A673 (cell line): ENCODE measurements at regions of chr11 and their contacts with region 1.

Region 1: DNA sequence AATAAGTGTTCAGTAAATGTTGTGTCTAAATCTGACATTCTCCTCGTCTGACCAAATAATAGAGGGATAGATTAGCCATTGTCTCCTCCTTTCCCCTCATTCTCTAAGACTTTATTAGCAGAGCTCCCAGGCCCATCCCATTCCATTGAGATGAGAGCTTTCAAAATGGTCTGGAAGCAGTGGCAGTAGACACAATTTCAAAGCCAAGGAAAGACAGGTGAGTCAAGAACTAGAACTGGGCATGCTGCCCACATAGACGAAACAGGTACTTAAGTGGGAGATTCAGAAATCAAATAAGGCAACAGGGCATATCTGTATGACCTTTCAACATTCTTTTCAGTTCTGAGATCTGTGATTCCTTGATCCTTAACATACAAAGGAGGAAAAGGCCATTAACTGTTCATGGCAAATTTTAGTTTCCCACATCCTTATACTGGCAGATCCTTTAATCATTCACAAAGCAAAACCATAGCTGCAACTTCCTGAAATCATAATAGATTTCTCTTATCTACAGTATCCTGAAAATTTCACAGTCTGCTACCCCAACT is 96.6 kb upstream of the KCNA4 start:
- DNase-seq: no peak
- H3K4me3 ChIP-seq: no peak overlapping the region
- H3K27ac ChIP-seq: no peak overlapping the region
- H3K4me1 ChIP-seq: no peaks in the 10 kb centered on the region
- H3K27me3 ChIP-seq: no peaks in the 10 kb centered on the region
- CTCF ChIP-seq: no peak

Region 2: GRCh38 chr11:30128269-30128932 is 15.0 kb after region 1 on chr11:
- CTCF ChIA-PET with region 1: interaction called, 11 read pairs
- POLR2A ChIA-PET with region 1: no interaction called
- intact Hi-C with region 1: no loop called
- DNase-seq: peak; percentile 78
- H3K4me3 ChIP-seq: no peak overlapping the region
- H3K27ac ChIP-seq: no peak overlapping the region
- H3K4me1 ChIP-seq: no peaks in the 10 kb centered on the region
- H3K27me3 ChIP-seq: no peaks in the 10 kb centered on the region
- CTCF ChIP-seq: peak; percentile 99

Region 3: DNA sequence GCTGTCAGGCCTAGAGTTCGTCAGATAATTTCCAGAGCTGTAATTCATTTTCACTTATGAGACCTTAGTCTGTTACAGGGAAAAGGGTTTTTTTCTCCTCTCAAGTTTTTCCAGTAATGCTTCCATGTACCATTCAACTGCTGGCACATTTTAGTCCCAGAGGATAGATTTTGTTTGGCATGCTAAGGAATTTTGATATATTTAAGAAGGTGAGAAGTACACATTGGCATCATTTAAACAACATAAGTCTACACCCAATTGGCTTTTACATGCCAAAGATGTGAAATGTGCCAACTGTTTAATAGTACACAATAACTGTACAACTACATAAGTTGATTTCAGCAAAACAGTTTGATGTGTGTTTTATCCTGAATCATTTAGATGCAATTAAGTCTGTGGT is 1626.7 kb after region 1 on chr11:
- CTCF ChIA-PET with region 1: no interaction called
- POLR2A ChIA-PET with region 1: no interaction called
- intact Hi-C with region 1: no loop called
- DNase-seq: no peak
- H3K4me3 ChIP-seq: no peak overlapping the region
- H3K27ac ChIP-seq: no peak overlapping the region
- H3K4me1 ChIP-seq: no peaks in the 10 kb centered on the region
- H3K27me3 ChIP-seq: no peaks in the 10 kb centered on the region
- CTCF ChIP-seq: no peak